MCF 10A (cell line): ENCODE measurements at regions of chrX and their contacts with region 1.

Region 1: DNA sequence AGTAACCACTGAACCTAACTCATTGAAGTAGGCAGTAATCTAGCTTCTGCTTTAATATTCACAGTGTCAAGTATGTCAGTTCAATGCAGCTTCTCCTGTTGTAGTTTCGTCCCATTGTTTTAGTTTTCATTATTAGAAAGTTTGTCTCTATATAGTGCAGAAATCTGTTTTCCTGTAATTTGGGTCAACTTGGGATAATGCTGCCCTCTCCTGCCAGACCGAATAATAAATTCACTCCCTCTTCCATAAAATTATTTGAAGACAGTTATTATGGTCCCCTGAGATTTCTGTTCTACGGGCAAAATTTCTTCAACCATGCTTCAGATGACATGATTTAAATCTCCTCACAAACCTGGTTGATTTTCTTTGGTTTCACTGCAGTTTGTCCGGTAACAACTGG is 4.6 kb upstream of the LUZP4 start:
- DNase-seq: no peak
- H3K4me3 Mint-ChIP-seq: no peak overlapping the region
- H3K27ac Mint-ChIP-seq: no peak overlapping the region
- H3K4me1 Mint-ChIP-seq: no peaks in the 10 kb centered on the region
- H3K27me3 Mint-ChIP-seq: peaks cover 55% of the 10 kb centered on the region
- CTCF ChIP-seq: peak; percentile 12

Region 2: GRCh38 chrX:114889481-114889880 is 395.4 kb before region 1 on chrX:
- CTCF ChIA-PET with region 1: no interaction called
- POLR2A ChIA-PET with region 1: no interaction called
- intact Hi-C with region 1: no loop called
- DNase-seq: no peak
- H3K4me3 Mint-ChIP-seq: no peak overlapping the region
- H3K27ac Mint-ChIP-seq: no peak overlapping the region
- H3K4me1 Mint-ChIP-seq: no peaks in the 10 kb centered on the region
- H3K27me3 Mint-ChIP-seq: peaks cover 37% of the 10 kb centered on the region
- CTCF ChIP-seq: no peak

Region 3: GRCh38 chrX:115174548-115174947 is 110.3 kb before region 1 on chrX:
- CTCF ChIA-PET with region 1: no interaction called
- POLR2A ChIA-PET with region 1: no interaction called
- intact Hi-C with region 1: no loop called
- DNase-seq: no peak
- H3K4me3 Mint-ChIP-seq: no peak overlapping the region
- H3K27ac Mint-ChIP-seq: no peak overlapping the region
- H3K4me1 Mint-ChIP-seq: no peaks in the 10 kb centered on the region
- H3K27me3 Mint-ChIP-seq: peaks cover 51% of the 10 kb centered on the region
- CTCF ChIP-seq: no peak

Region 4: DNA sequence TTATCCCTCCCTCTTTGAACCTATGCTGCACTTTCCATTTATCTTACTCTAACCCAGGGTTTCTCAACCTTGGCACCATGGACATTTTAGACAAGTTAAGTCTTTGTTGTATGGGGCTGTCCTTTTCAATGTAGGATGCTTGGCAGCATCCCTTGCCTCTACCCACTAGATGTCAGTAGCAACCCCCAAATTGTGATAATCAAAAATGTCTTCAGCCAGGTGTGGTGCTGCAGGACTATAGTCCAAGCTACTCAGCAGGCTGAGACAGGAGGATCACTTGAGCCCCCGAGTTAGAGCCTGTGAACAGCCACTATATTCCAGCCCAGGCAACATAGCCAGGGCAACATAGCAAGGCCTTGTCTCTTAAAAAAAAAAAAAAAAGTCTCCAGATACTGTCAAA is 57.9 kb before region 1 on chrX:
- CTCF ChIA-PET with region 1: no interaction called
- POLR2A ChIA-PET with region 1: interaction called, 4 read pairs
- intact Hi-C with region 1: loop called (anchors 1 kb)
- DNase-seq: peak; percentile 56
- H3K4me3 Mint-ChIP-seq: no peak overlapping the region
- H3K27ac Mint-ChIP-seq: no peak overlapping the region
- H3K4me1 Mint-ChIP-seq: no peaks in the 10 kb centered on the region
- H3K27me3 Mint-ChIP-seq: peaks cover 77% of the 10 kb centered on the region
- CTCF ChIP-seq: peak; percentile 43

Region 5: GRCh38 chrX:115372152-115372551 is 87.3 kb after region 1 on chrX:
- CTCF ChIA-PET with region 1: no interaction called
- POLR2A ChIA-PET with region 1: no interaction called
- intact Hi-C with region 1: no loop called
- DNase-seq: peak; percentile 39
- H3K4me3 Mint-ChIP-seq: no peak overlapping the region
- H3K27ac Mint-ChIP-seq: peak overlapping the region; percentile 59
- H3K4me1 Mint-ChIP-seq: peaks cover 8% of the 10 kb centered on the region
- H3K27me3 Mint-ChIP-seq: peaks cover 57% of the 10 kb centered on the region
- CTCF ChIP-seq: no peak